AG04449 (cell line): ENCODE measurements at regions of chr17 and their contacts with region 1.

Region 1: DNA sequence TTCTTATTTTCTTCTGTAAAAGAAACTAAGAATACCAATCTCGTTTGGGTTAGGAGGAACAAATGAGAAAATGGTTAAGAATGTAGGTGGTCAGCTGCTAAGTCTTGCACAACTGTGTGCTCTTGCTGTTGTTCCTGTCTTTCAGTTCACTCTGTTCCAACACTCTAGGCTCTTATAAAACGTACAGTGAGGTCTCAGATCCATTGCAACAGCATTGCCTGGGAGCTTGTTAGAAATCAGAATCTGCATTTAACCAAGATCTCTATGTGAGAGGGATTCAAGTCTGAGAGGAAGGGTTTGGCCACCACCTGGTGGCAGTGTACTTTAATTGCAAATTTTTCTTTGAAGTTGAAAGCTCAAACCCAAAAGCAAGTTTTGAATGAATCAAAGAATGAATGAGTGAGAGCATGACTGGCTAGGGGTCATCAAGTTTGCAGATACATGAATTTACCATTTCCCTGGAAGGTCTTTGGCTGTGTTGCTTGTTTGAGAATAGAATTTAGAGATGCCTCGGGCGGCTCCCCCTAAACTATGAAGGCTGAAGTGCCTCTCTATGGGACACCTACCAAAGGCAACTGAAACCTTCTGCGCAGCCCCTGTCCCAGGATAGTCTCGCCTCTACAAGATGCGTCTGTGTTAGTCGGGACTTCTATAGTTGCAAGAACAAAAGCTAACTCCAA is 2.5 kb downstream of the ALOX15B start:
- DNase-seq: no peak
- H3K4me3 ChIP-seq: no peak overlapping the region
- CTCF ChIP-seq: peak; percentile 33

Region 2: DNA sequence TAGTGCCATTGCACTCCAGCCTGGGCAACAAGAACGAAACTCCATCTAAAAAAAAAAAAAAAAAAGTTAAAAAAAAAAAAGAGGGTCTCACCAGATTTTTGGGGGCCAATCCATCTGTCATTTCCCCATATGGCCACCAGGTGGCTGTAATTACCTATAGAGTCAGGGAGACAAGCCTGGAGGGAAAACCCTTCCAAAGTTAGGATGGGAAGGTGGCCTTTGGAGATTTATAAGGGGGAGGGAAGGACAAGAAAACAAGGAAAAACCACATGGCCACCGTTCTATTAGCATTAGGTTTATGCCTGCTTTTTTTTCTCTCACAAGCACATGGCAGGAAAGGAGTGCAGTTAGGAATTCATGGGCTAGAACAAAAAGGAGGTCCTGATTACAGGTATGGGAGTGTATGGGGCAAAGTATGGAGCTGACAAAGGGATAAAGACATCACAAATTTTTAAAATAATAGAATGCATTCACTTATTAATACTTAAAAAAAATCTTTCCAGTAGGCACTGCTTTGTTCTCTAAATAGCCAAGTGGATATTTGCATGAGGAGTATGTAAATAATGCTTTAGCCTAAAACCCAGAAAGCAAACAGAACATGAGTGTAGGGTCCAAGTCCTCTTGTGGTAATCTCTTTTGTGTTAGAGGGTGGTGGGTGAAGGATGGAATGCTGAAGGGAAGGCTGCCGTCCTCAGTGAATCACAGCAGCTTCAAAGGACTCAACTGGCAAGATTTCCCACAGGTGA is 178.5 kb before region 1 on chr17:
- CTCF ChIA-PET with region 1: interaction called, 41 read pairs
- POLR2A ChIA-PET with region 1: no interaction called
- DNase-seq: no peak
- H3K4me3 ChIP-seq: no peak overlapping the region
- CTCF ChIP-seq: peak; percentile 59

Region 3: GRCh38 chr17:7931709-7932482 is 109.5 kb before region 1 on chr17 and contains the starts of genes CNTROB and TRAPPC1:
- CTCF ChIA-PET with region 1: interaction called, 19 read pairs
- POLR2A ChIA-PET with region 1: no interaction called
- DNase-seq: peak; percentile 92
- H3K4me3 ChIP-seq: peak within 1 kb of the TSS; percentile 100
- CTCF ChIP-seq: no peak

Region 4: DNA sequence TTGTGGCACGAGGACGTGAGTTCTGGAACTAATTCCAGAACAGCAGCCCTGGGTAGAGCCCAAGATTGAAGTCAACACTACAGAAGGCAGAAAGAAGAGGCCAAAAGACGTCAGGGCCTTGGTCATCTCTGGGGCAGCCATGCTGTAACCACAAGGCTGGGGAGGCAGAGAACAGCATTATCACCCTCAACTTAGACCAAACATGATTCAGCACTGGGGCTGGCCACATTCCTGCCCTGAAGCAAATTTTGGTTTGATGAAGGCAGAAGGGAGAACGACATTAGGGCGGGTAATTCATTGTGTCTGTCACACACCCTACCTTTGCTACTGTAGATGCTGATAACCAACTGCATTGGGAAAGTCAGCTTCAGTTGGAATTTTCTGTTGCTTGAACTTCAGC is 12.3 kb before region 1 on chr17:
- CTCF ChIA-PET with region 1: interaction called, 50 read pairs
- POLR2A ChIA-PET with region 1: no interaction called
- DNase-seq: no peak
- H3K4me3 ChIP-seq: no peak overlapping the region
- CTCF ChIP-seq: no peak

Region 5: DNA sequence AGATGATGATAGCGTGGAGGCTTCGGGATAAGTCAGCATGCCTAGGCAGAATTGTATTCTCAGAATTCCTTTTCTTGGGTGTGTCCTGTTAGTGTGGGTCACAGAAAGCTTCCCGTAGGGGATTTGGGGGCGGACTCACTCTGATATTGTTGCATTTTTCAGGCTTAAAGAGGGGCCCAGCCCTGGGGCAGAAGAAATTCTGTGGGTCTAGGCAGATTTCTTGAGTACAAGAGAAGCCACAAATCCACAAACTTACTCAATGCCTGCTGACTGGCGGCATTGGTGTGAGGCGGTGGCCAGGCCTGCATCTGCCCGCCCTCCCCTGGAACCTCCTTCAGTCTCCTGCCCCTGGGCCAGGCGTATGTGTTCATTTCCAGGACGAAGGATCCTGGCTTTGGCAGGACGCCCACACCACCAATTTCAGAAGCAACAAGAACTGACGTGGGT is 685.7 kb after region 1 on chr17:
- CTCF ChIA-PET with region 1: no interaction called
- POLR2A ChIA-PET with region 1: no interaction called
- DNase-seq: no peak
- H3K4me3 ChIP-seq: no peak overlapping the region
- CTCF ChIP-seq: no peak